Prostate gland (tissue), 2 donors: ENCODE measurements at regions of chr16 and their contacts with region 1.

Region 1: GRCh38 chr16:31868691-31869167 is 4.9 kb upstream of the ZNF267 start:
- DNase-seq: peak; percentile 68
- H3K4me3 ChIP-seq: no peak overlapping the region
- H3K27ac ChIP-seq: no peak overlapping the region
- H3K4me1 ChIP-seq: no peaks in the 10 kb centered on the region
- H3K27me3 ChIP-seq: no peaks in the 10 kb centered on the region
- CTCF ChIP-seq: peak; percentile 75 to 79 (median 77)
- POLR2A ChIP-seq: no peak

Region 2: GRCh38 chr16:31157136-31157535 is 711.6 kb before region 1 on chr16:
- intact Hi-C with region 1: loop called (anchors 10 kb)
- DNase-seq: no peak
- H3K4me3 ChIP-seq: no peak overlapping the region
- H3K27ac ChIP-seq: no peak overlapping the region
- H3K4me1 ChIP-seq: no peaks in the 10 kb centered on the region
- H3K27me3 ChIP-seq: no peaks in the 10 kb centered on the region
- CTCF ChIP-seq: no peak
- POLR2A ChIP-seq: no peak

Region 3: DNA sequence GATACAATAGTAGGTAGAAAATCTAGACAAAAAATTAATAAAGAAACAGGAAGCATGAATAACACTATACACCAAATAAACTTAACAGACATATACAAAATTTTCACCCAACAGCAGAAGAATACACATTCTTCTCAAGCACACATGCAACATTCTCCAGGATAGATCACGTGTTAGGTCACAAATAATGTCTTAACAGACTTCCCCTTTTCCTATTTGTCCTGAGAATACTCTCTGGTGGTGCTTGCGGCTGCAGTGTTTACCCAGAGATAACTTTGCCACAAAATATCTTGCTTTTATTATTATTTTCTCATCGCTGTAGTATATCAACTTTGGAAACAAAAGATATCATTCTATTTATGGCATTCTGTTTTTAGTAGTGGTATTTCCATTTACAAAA is 35.7 kb before region 1 on chr16:
- intact Hi-C with region 1: no loop called
- DNase-seq: no peak
- H3K4me3 ChIP-seq: no peak overlapping the region
- H3K27ac ChIP-seq: no peak overlapping the region
- H3K4me1 ChIP-seq: no peaks in the 10 kb centered on the region
- H3K27me3 ChIP-seq: no peaks in the 10 kb centered on the region
- CTCF ChIP-seq: no peak
- POLR2A ChIP-seq: no peak

Region 4: GRCh38 chr16:31899505-31899904 is 30.8 kb after region 1 on chr16:
- intact Hi-C with region 1: no loop called
- DNase-seq: no peak
- H3K4me3 ChIP-seq: no peak overlapping the region
- H3K27ac ChIP-seq: no peak overlapping the region
- H3K4me1 ChIP-seq: no peaks in the 10 kb centered on the region
- H3K27me3 ChIP-seq: no peaks in the 10 kb centered on the region
- CTCF ChIP-seq: no peak
- POLR2A ChIP-seq: no peak